ENCODE measurements at regions of chr11 and their contacts with region 1.

Region 1: GRCh38 chr11:71507102-71507501 is 20.0 kb upstream of the KRTAP5-7 start:
- DNase-seq: no peak
- ATAC-seq: no peak
- H3K4me3 ChIP-seq: no peak overlapping the region
- H3K27ac ChIP-seq: no peak overlapping the region
- H3K4me1 ChIP-seq: no peaks in the 10 kb centered on the region
- H3K27me3 ChIP-seq: no peaks in the 10 kb centered on the region
- CTCF ChIP-seq: no peak

Region 2: DNA sequence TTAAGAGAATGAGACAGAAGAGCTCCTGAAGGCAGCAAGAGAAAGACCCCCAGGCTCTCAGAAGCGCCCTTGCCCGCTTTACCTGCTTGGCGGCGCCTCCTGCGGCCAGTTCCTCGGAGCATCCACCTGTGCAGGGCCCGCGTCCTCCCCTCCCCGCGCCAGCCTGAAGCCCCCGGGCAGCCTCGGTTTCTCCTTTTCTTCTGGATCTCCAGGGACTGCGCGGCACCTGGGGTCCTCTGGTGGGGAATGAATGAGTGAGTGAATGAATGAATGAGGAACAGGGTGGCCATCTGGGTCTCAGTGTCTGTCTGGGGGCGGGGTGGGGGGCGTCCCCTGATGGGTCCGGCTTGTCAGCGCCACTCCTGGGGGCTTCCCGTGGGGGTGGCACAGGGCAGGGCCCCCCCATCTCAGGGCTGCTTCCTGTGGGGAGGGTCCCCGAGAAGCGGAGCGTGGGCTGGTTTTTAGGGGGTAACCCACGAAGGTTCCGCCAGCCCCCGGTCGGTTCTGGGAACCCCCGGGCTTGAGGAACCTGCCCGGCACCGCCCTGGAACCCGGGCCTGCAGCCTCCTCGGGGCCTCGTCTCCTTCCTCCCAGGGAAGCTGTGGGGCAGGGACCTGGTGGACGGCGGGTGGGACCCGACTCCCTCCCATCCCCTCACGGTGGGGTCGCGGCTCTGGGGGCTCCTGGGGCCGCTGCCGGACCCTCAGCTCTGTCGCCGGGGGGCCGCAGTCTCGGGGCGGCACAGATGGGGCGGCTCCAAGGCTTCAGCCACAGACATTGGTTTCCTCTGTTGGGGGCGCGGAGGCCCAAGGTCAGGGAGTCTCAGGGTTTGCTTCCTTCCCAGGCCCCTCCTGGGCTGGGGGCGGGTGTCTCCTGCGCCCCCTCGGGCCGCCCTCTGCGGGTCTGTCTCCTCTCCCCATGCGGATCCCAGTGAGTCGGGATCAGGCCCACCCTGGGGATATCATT is 11.7 kb after region 1 on chr11:
- CTCF ChIA-PET with region 1: no interaction called
- POLR2A ChIA-PET with region 1: no interaction called
- in situ Hi-C with region 1: no loop called
- intact Hi-C with region 1: loop called (anchors 1 kb)
- DNase-seq: no peak
- ATAC-seq: no peak
- H3K4me3 ChIP-seq: no peak overlapping the region
- H3K27ac ChIP-seq: no peak overlapping the region
- H3K4me1 ChIP-seq: no peaks in the 10 kb centered on the region
- H3K27me3 ChIP-seq: no peaks in the 10 kb centered on the region
- CTCF ChIP-seq: no peak

Region 3: GRCh38 chr11:72483412-72484186 is 976.5 kb after region 1 on chr11:
- CTCF ChIA-PET with region 1: no interaction called
- POLR2A ChIA-PET with region 1: no interaction called
- in situ Hi-C with region 1: no loop called
- intact Hi-C with region 1: no loop called
- DNase-seq: peak; percentile 10
- ATAC-seq: no peak
- H3K4me3 ChIP-seq: no peak overlapping the region
- H3K27ac ChIP-seq: no peak overlapping the region
- H3K4me1 ChIP-seq: no peaks in the 10 kb centered on the region
- H3K27me3 ChIP-seq: peaks cover 23% of the 10 kb centered on the region
- CTCF ChIP-seq: no peak

Measured in Panc1 (cell line).